Activated naive CD4-positive, alpha-beta T cell treated with anti-CD3 and anti-CD28 coated beads for 36 hours (primary cell): ENCODE measurements at regions of chr1 and their contacts with region 1.

Region 1: DNA sequence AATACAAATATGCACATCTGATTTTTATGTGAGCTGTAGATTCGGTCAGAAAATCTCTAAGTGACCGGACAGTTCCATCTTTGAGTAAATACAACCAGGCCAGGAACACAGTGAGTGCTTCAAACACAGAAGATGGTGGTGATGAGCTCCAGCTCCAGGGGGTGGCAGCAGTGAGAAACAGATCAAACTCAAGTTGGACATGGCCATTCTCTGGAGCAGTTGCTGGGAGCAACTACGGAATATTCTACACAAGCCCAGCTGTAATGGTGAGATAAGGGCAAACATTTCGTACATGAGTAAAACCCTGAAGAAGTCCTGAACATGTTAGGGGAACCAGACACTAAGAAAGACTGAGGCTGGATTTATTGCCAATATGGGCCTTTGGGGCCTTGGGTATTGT is 100.7 kb downstream of the BARHL2 start:
- DNase-seq: peak; percentile 19
- H3K4me3 Mint-ChIP-seq: no peak overlapping the region
- H3K27ac Mint-ChIP-seq: no peak overlapping the region
- H3K4me1 Mint-ChIP-seq: no peaks in the 10 kb centered on the region
- H3K27me3 Mint-ChIP-seq: peaks cover 8% of the 10 kb centered on the region

Region 2: GRCh38 chr1:90800012-90800717 is 183.8 kb after region 1 on chr1:
- CTCF ChIA-PET with region 1: no interaction called
- intact Hi-C with region 1: no loop called
- DNase-seq: no peak
- H3K4me3 Mint-ChIP-seq: no peak overlapping the region
- H3K27ac Mint-ChIP-seq: no peak overlapping the region
- H3K4me1 Mint-ChIP-seq: no peaks in the 10 kb centered on the region
- H3K27me3 Mint-ChIP-seq: peaks cover 25% of the 10 kb centered on the region

Region 3: DNA sequence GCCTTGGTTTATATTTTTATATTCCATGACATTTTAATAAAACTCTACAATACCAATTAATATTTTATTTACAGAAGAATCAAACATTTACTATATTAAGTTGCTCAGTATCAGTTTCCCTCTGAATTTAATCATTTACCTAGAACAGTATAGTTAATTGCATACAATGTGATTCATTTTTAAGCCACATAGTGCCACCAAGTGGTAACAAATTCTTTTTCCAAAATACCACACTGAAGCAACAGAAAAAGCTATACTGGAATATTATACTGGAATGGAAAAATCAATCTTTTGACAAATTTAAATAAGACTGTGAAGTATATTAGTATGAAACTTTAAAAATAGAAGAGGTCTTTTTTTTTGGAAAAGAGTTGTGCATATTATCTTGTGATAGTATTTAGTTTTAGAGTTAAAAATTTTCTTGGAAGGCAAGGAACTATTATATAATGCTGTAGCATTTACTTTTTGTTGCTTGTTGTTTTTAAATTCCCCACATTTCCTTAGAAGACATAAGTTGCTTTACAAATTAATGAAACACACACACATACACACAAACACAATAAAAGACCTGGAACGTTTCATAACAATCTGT is 348.1 kb after region 1 on chr1:
- CTCF ChIA-PET with region 1: no interaction called
- intact Hi-C with region 1: loop called (anchors 10 kb)
- DNase-seq: no peak
- H3K4me3 Mint-ChIP-seq: no peak overlapping the region
- H3K27ac Mint-ChIP-seq: no peak overlapping the region
- H3K4me1 Mint-ChIP-seq: peaks cover 40% of the 10 kb centered on the region
- H3K27me3 Mint-ChIP-seq: no peaks in the 10 kb centered on the region